Activated CD4-positive, alpha-beta T cell treated with anti-CD3 and anti-CD28 coated beads for 36 hours (primary cell): ENCODE measurements at regions of chr1 and their contacts with region 1.

Region 1: DNA sequence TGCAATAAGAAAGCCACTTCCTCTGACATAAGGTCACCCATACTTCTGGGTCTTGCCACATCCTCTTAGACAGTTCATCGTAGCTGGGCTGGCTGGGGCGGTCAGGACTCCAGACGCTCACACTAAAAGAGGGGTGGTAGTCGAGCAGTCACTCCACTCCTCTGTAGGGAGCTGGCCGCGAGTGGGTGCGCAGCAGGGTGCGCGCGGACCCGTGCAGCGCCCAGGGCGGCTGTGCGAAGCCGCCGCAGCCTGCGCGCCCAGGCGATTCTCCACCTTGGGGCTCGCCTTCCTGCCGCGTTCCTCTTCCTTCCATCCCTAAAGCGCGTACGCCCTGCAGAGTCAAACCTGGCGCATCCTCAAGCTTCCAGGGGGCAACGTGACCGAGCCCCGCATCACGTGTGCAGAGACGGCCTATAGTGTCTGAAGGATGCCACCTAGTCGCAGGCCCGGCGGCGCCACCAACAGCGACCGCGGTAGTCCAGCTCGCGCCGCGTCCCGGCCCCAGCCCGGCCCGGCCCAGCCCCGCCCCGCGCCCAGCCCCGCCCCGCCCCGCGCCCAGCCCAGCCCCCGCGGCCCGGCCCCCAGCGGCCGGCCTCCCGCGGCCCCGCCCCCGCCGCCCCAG is 360 bp upstream of the PRDX6 start:
- DNase-seq: peak; percentile 92
- ATAC-seq: peak; percentile 85
- H3K4me3 Mint-ChIP-seq: peak overlapping the region; percentile 89
- H3K27ac Mint-ChIP-seq: peak overlapping the region; percentile 91
- H3K4me1 Mint-ChIP-seq: peaks cover 58% of the 10 kb centered on the region
- H3K27me3 Mint-ChIP-seq: no peaks in the 10 kb centered on the region

Region 2: GRCh38 chr1:172429331-172430127 is 1047.2 kb before region 1 on chr1:
- CTCF ChIA-PET with region 1: no interaction called
- POLR2A ChIA-PET with region 1: no interaction called
- intact Hi-C with region 1: no loop called
- DNase-seq: peak; percentile 66
- ATAC-seq: peak; percentile 71
- H3K4me3 Mint-ChIP-seq: no peak overlapping the region
- H3K27ac Mint-ChIP-seq: no peak overlapping the region
- H3K4me1 Mint-ChIP-seq: peaks cover 30% of the 10 kb centered on the region
- H3K27me3 Mint-ChIP-seq: no peaks in the 10 kb centered on the region

Region 3: GRCh38 chr1:172870901-172871606 is 605.7 kb before region 1 on chr1:
- CTCF ChIA-PET with region 1: no interaction called
- POLR2A ChIA-PET with region 1: no interaction called
- intact Hi-C with region 1: loop called in 1 of 2 experiments (anchors 5 kb)
- DNase-seq: peak; percentile 10
- ATAC-seq: peak; percentile 54
- H3K4me3 Mint-ChIP-seq: no peak overlapping the region
- H3K27ac Mint-ChIP-seq: no peak overlapping the region
- H3K4me1 Mint-ChIP-seq: peaks cover 33% of the 10 kb centered on the region
- H3K27me3 Mint-ChIP-seq: peaks cover 32% of the 10 kb centered on the region

Region 4: DNA sequence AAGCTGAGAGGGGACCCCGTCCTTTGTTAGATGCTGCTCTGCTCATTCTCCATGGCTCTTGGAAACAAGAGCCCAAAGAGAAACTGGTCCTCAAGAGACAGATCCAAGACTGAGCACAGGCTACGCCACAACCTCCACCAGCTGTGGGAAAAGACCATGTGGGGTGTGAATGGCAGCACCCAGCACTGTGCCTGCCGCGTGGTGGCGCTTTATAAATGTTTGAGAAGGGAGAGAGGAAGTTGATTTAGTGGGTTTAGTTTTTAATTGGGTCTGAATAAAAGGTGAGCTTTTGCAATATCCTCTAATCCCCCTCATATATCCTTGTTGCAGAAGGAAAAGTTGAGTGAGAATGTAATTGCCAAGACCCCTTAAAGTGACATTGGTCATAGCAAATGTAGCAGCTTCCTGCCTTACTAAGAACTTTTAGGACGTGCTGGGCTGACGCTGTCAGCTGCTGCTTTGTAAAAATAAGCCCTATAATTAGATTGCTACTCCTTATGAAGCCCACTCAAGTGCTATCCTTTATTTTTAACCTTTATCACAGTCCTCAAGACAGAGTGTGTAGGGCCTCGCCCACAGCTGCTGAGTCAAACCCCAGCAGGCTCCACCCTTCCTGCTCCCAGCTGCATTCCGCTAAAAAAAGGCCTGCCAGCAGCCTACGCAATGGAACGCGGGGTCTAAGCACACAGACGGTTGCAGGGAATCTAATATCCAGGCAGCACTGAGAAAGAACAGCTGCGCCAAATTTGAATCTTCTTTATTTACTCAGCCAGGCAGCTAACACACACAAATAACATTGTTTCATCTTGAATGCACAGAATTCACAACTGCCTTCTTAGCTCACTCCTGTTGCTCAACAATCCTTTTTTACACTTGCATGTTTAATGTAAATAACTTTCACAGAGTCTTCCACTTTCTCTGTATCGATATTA is 47.0 kb before region 1 on chr1:
- CTCF ChIA-PET with region 1: interaction called, 47 read pairs
- POLR2A ChIA-PET with region 1: interaction called, 3 read pairs
- intact Hi-C with region 1: loop called (anchors 1 kb)
- DNase-seq: peak; percentile 86
- ATAC-seq: peak; percentile 87
- H3K4me3 Mint-ChIP-seq: peak overlapping the region; percentile 52
- H3K27ac Mint-ChIP-seq: peak overlapping the region; percentile 79
- H3K4me1 Mint-ChIP-seq: peaks cover 25% of the 10 kb centered on the region
- H3K27me3 Mint-ChIP-seq: no peaks in the 10 kb centered on the region

Region 5: GRCh38 chr1:173714759-173715537 is 238.2 kb after region 1 on chr1 and contains the start of gene KLHL20:
- CTCF ChIA-PET with region 1: no interaction called
- POLR2A ChIA-PET with region 1: no interaction called
- intact Hi-C with region 1: loop called (anchors 1 to 5 kb)
- DNase-seq: peak; percentile 90
- ATAC-seq: peak; percentile 99
- H3K4me3 Mint-ChIP-seq: peak within 1 kb of the TSS; percentile 86
- H3K27ac Mint-ChIP-seq: peak within 1 kb of the TSS; percentile 88
- H3K4me1 Mint-ChIP-seq: peaks cover 24% of the 10 kb centered on the region
- H3K27me3 Mint-ChIP-seq: peaks cover 11% of the 10 kb centered on the region
- total RNA-seq, gene KLHL20: 11.1 to 14.1 TPM

Region 6: GRCh38 chr1:173802961-173803360 is 326.2 kb after region 1 on chr1:
- CTCF ChIA-PET with region 1: no interaction called
- POLR2A ChIA-PET with region 1: no interaction called
- intact Hi-C with region 1: no loop called
- DNase-seq: no peak
- ATAC-seq: no peak
- H3K4me3 Mint-ChIP-seq: no peak overlapping the region
- H3K27ac Mint-ChIP-seq: no peak overlapping the region
- H3K4me1 Mint-ChIP-seq: no peaks in the 10 kb centered on the region
- H3K27me3 Mint-ChIP-seq: no peaks in the 10 kb centered on the region

Region 7: DNA sequence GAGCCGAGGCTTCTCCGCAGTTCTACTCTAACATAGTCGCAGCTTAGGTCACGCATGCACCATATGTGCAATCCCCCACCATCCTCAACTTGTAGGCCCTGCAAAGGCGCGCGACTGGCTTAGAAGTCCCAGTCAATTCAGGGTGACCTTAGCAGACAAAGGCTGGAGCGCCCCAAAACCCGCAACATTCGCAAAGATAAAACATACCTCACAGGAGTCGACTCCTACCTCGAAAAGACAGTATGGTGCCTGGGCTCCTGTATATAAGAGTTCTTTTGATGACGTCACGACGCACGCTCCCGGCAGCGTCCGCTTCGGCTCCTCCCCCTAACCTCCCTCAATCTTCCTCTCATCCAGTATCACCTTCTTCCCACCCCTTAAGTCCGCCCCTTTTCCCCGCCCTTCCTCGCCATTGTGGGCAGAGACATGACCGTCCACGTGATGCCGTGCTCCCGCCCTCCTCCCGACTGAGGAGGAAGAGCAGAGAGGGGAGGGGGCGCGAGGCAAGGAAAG is 391.0 kb after region 1 on chr1 and contains the start of gene GAS5:
- CTCF ChIA-PET with region 1: no interaction called
- POLR2A ChIA-PET with region 1: interaction called, 9 read pairs
- intact Hi-C with region 1: loop called (anchors 1 to 2 kb)
- DNase-seq: peak; percentile 100
- ATAC-seq: peak; percentile 82
- H3K4me3 Mint-ChIP-seq: peak within 1 kb of the TSS; percentile 91
- H3K27ac Mint-ChIP-seq: peak within 1 kb of the TSS; percentile 97
- H3K4me1 Mint-ChIP-seq: peaks cover 57% of the 10 kb centered on the region
- H3K27me3 Mint-ChIP-seq: no peaks in the 10 kb centered on the region
- total RNA-seq, gene GAS5: 878 to 1,203 TPM

Region 8: DNA sequence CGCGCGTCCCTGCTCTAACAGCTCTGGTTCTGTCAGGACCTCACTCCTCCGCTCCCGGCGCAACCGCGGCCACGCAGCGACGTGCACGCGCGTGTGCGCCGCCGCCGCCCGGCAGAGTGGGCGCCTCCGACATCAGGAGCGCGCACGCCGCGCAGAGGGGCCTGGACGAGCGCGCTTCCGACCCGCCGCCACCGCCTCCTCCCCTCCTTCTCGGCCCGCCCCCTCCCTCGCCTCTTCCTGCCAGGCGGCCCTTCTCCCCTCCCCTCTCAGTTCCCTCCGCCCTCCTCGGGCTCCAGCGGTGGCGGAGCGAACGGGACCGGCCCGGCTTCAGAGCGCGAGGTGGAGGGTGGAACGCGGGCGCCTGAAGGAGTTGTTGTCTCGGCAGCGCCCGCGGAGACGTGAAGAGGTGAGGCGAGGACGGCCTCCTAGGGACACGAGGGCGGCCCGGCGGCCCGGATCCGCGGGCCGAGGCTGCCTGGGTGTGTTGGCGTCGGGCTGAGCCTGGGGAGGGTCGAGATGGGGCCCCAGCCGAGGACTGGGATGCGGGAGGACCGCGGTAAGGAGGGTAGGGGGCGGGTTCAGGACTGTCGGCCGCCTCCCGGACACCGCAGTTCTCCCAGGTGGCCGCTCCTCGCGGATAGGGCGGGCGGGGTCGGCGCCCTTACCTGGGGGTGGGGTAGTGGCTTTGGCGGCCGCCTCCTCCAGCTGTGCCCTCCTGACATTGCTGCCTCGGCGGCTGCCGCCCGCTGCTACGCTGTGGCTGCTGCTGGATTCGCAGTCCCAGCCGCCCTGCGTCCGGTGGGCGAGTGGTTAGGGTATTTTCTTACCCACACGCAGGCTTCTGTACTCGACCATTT is 682.7 kb after region 1 on chr1 and contains the start of gene RABGAP1L:
- CTCF ChIA-PET with region 1: no interaction called
- POLR2A ChIA-PET with region 1: interaction called, 3 read pairs
- intact Hi-C with region 1: loop called in 1 of 2 experiments (anchors 2 kb)
- DNase-seq: peak; percentile 97
- ATAC-seq: peak; percentile 83
- H3K4me3 Mint-ChIP-seq: peak within 1 kb of the TSS; percentile 93
- H3K27ac Mint-ChIP-seq: peak within 1 kb of the TSS; percentile 95
- H3K4me1 Mint-ChIP-seq: peaks cover 59% of the 10 kb centered on the region
- H3K27me3 Mint-ChIP-seq: no peaks in the 10 kb centered on the region
- total RNA-seq, gene RABGAP1L: 22.6 to 29.9 TPM

Region 9: GRCh38 chr1:175192630-175193526 is 1716.1 kb after region 1 on chr1 and contains the start of gene KIAA0040:
- CTCF ChIA-PET with region 1: no interaction called
- POLR2A ChIA-PET with region 1: no interaction called
- intact Hi-C with region 1: loop called in 1 of 2 experiments (anchors 2 kb)
- DNase-seq: peak; percentile 81
- ATAC-seq: peak; percentile 65
- H3K4me3 Mint-ChIP-seq: peak within 1 kb of the TSS; percentile 99
- H3K27ac Mint-ChIP-seq: peak within 1 kb of the TSS; percentile 93
- H3K4me1 Mint-ChIP-seq: peaks cover 47% of the 10 kb centered on the region
- H3K27me3 Mint-ChIP-seq: no peaks in the 10 kb centered on the region
- total RNA-seq, gene KIAA0040: 25.4 to 26.1 TPM